GM12878 (cell line): ENCODE measurements at regions of chr4 and their contacts with region 1.

Region 1: DNA sequence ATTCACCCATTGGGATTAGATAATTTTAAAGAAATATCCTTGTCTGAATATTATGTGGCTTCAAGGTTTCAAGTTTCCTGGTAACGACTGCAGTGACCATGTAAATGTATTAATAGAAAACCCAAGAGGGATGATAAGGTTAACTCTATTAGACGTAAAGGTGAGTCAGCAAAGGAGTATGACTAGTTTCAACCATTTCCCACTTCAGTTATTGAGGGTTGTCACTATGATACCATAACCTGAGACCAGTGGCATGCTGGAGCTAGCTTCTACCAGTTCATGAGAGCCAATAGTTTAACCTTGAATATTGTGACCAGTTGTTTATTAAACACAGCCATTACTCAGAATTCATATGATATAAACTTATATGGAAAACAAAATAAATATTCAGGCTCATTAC is 270.1 kb downstream of the TMA16 start:
- DNase-seq: no peak
- ATAC-seq: no peak
- H3K4me3 ChIP-seq: no peak overlapping the region
- H3K27ac ChIP-seq: no peak overlapping the region
- H3K4me1 ChIP-seq: no peaks in the 10 kb centered on the region
- H3K27me3 ChIP-seq: no peaks in the 10 kb centered on the region
- CTCF ChIP-seq: no peak
- EP300 ChIP-seq: no peak
- POLR2A ChIP-seq: no peak
- RAD21 ChIP-seq: no peak

Region 2: DNA sequence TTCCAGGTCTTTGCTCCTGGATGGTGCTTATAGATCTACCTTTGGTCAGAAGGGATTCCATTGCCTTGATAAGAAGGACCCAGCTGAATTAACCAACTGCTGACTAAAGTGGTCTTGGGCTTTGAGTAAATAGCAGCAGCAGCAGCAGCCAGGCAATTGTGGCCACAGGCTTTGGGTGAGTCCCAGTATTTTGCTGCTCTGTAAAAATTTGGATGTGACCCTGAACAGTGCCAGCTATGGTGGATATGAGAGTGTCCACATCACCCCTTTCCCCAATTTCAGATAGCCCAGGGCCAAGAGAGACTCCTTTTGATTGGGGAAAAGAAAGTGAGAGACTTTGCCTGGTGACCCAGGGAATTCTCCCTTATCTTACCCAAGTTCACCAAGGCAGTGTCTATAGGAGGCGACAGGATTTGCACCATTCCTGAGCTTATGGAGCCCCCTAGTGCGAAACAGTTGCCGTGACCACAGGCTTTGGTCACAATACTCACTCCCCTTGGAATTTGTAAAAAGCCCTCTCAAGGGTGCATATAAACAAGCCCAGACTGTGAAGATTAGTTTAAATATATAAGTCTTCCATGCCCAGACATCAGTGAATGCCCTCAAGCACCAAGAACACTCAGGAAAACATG is 247.9 kb after region 1 on chr4:
- CTCF ChIA-PET with region 1: no interaction called
- POLR2A ChIA-PET with region 1: no interaction called
- RAD21 ChIA-PET with region 1: no interaction called
- SMC1A ChIA-PET with region 1: no interaction called
- in situ Hi-C with region 1: no loop called
- intact Hi-C with region 1: loop called (anchors 5 kb)
- DNase-seq: no peak
- ATAC-seq: peak; percentile 78
- H3K4me3 ChIP-seq: no peak overlapping the region
- H3K27ac ChIP-seq: no peak overlapping the region
- H3K4me1 ChIP-seq: no peaks in the 10 kb centered on the region
- H3K27me3 ChIP-seq: no peaks in the 10 kb centered on the region
- CTCF ChIP-seq: peak; percentile 30 to 54 (median 40); a peak in 4 of 6 replicates
- EP300 ChIP-seq: no peak
- POLR2A ChIP-seq: no peak
- RAD21 ChIP-seq: peak; percentile 66